ENCODE measurements at regions of chr18 and their contacts with region 1.

Region 1: GRCh38 chr18:53567929-53568574 is 656.4 kb downstream of the MBD2 start:
- DNase-seq: peak in 2 of 4 experiments; percentile 7 to 14
- ATAC-seq: no peak
- H3K4me3 ChIP-seq: no peak overlapping the region
- H3K27ac ChIP-seq: no peak overlapping the region
- H3K4me1 ChIP-seq: no peaks in the 10 kb centered on the region
- H3K27me3 ChIP-seq: no peaks in the 10 kb centered on the region
- CTCF ChIP-seq: peak; percentile 13 to 40 (median 37); a peak in 3 of 6 replicates
- EP300 ChIP-seq: no peak
- POLR2A ChIP-seq: no peak
- RAD21 ChIP-seq: peak; percentile 38 to 45; a peak in 3 of 4 replicates

Region 2: GRCh38 chr18:53521068-53521467 is 47.0 kb before region 1 on chr18:
- CTCF ChIA-PET with region 1: no interaction called
- POLR2A ChIA-PET with region 1: no interaction called
- in situ Hi-C with region 1: no loop called
- intact Hi-C with region 1: no loop called
- DNase-seq: no peak
- ATAC-seq: no peak
- H3K4me3 ChIP-seq: no peak overlapping the region
- H3K27ac ChIP-seq: no peak overlapping the region
- H3K4me1 ChIP-seq: no peaks in the 10 kb centered on the region
- H3K27me3 ChIP-seq: no peaks in the 10 kb centered on the region
- CTCF ChIP-seq: no peak
- EP300 ChIP-seq: no peak
- POLR2A ChIP-seq: no peak
- RAD21 ChIP-seq: no peak

Region 3: GRCh38 chr18:54119524-54120019 is 551.5 kb after region 1 on chr18:
- CTCF ChIA-PET with region 1: interaction called, 3 read pairs
- POLR2A ChIA-PET with region 1: no interaction called
- in situ Hi-C with region 1: loop called (anchors 25 kb)
- intact Hi-C with region 1: loop called (anchors 10 kb)
- DNase-seq: peak; percentile 11 to 44 (median 20)
- ATAC-seq: peak; percentile 88
- H3K4me3 ChIP-seq: no peak overlapping the region
- H3K27ac ChIP-seq: no peak overlapping the region
- H3K4me1 ChIP-seq: no peaks in the 10 kb centered on the region
- H3K27me3 ChIP-seq: no peaks in the 10 kb centered on the region
- CTCF ChIP-seq: peak; percentile 19 to 70 (median 58); a peak in 4 of 6 replicates
- EP300 ChIP-seq: no peak
- POLR2A ChIP-seq: no peak
- RAD21 ChIP-seq: peak; percentile 77 to 79

Measured in K562 (cell line).